ENCODE measurements at regions of chr16 and their contacts with region 1.

Region 1: GRCh38 chr16:57377080-57377841 is 5.0 kb downstream of the CX3CL1 start:
- DNase-seq: peak; percentile 71
- H3K4me3 Mint-ChIP-seq: peak overlapping the region; percentile 28
- H3K27ac Mint-ChIP-seq: peak overlapping the region; percentile 93
- H3K4me1 Mint-ChIP-seq: peaks cover 78% of the 10 kb centered on the region
- H3K27me3 Mint-ChIP-seq: no peaks in the 10 kb centered on the region
- CTCF ChIP-seq: peak; percentile 60

Region 2: GRCh38 chr16:57392694-57393093 is 15.4 kb after region 1 on chr16:
- CTCF ChIA-PET with region 1: interaction called, 10 read pairs
- intact Hi-C with region 1: no loop called
- DNase-seq: peak; percentile 82
- H3K4me3 Mint-ChIP-seq: no peak overlapping the region
- H3K27ac Mint-ChIP-seq: peak overlapping the region; percentile 74
- H3K4me1 Mint-ChIP-seq: peaks cover 51% of the 10 kb centered on the region
- H3K27me3 Mint-ChIP-seq: no peaks in the 10 kb centered on the region
- CTCF ChIP-seq: no peak

Region 3: DNA sequence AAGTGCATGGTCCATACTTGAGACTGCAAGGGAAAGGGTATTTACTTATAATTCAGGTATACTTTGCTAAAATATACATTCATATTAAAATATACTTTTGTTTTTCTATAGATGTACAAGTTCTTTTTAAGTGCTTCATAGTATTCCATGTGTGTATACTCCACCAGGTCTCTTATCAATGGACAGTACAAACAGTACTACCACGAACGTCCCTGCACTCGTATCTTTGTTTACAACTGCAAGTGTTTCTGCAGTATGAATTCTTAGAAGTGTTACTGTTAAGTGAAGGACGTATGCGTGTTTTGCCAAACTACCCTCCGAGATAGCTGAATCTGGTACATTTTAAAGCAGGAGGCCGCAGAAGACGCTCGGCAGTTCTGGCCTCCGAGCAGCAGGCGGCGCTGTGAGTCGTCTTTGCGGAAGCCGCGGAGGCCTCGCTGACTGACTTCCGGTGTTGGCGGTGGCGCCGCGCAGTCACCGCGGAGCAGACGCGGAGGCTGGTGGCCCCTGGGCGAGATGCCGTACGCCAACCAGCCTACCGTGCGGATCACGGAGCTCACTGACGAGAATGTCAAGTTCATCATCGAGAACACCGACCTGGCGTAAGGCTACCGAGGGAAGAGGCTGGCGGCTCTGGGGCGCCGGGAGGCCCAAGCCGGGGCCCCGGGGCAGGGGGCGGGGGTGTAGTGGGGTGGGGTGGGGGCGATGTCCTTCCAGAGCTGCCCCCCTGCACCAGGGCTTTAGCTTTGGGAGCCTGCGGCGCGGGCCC is 85.1 kb after region 1 on chr16 and contains the start of gene POLR2C:
- CTCF ChIA-PET with region 1: no interaction called
- intact Hi-C with region 1: no loop called
- DNase-seq: peak; percentile 94
- H3K4me3 Mint-ChIP-seq: peak within 1 kb of the TSS; percentile 79
- H3K27ac Mint-ChIP-seq: peak within 1 kb of the TSS; percentile 68
- H3K4me1 Mint-ChIP-seq: peaks cover 15% of the 10 kb centered on the region
- H3K27me3 Mint-ChIP-seq: no peaks in the 10 kb centered on the region
- CTCF ChIP-seq: peak; percentile 93
- total RNA-seq, gene POLR2C: 69.4 and 80.0 TPM in 2 replicates

Measured in Calu3 (cell line).